ENCODE measurements at regions of chr22 and their contacts with region 1.

Region 1: GRCh38 chr22:37538590-37539357 is 19.6 kb upstream of the CARD10 start:
- DNase-seq: peak; percentile 92 to 95
- H3K4me3 ChIP-seq: no peak overlapping the region
- H3K27ac ChIP-seq: peak overlapping the region; percentile 46
- H3K4me1 ChIP-seq: peaks cover 60% of the 10 kb centered on the region
- H3K27me3 ChIP-seq: no peaks in the 10 kb centered on the region
- CTCF ChIP-seq: peak; percentile 99

Region 2: GRCh38 chr22:37445501-37445900 is 93.3 kb before region 1 on chr22:
- CTCF ChIA-PET with region 1: no interaction called
- POLR2A ChIA-PET with region 1: interaction called, 15 read pairs
- intact Hi-C with region 1: no loop called
- DNase-seq: no peak
- H3K4me3 ChIP-seq: no peak overlapping the region
- H3K27ac ChIP-seq: no peak overlapping the region
- H3K4me1 ChIP-seq: peaks cover 24% of the 10 kb centered on the region
- H3K27me3 ChIP-seq: no peaks in the 10 kb centered on the region
- CTCF ChIP-seq: no peak

Region 3: DNA sequence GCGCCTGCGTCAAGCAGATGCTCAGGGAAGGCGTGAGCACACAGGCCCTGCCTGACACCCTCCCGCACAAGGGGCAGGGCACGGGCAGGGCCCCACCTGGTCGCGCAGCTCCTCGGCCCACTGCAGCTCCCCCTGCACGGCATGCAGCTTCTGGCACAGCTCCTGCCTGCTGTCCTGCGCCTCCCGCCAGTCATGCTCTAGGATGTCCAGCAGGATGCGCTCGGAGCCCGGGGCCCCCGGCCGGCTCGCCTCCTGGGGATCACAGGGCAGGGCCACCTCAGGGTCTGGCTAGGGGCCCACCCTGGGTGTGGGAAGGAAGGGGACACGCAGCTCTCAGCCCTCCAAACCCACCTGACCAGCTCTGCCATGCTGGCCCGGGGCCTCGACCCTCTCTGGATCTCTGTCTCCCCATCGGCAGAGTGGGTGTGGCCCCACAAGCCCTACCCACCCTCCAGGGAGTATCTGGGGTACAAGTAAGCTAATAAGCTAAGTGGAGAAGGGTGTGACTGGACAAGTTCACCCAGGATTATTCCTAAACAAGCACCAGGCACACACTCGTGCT is 30.3 kb before region 1 on chr22:
- CTCF ChIA-PET with region 1: interaction called, 18 read pairs
- POLR2A ChIA-PET with region 1: interaction called, 5 read pairs
- intact Hi-C with region 1: loop called (anchors 1 kb)
- DNase-seq: peak; percentile 59 to 90
- H3K4me3 ChIP-seq: peak overlapping the region; percentile 3; the same call in 1 of the 2 replicates
- H3K27ac ChIP-seq: peak overlapping the region; percentile 74
- H3K4me1 ChIP-seq: peaks cover 61% of the 10 kb centered on the region
- H3K27me3 ChIP-seq: no peaks in the 10 kb centered on the region
- CTCF ChIP-seq: peak; percentile 37; the same call in 1 of the 2 replicates

Region 4: GRCh38 chr22:37581504-37581903 is 42.7 kb after region 1 on chr22:
- CTCF ChIA-PET with region 1: no interaction called
- POLR2A ChIA-PET with region 1: interaction called, 16 read pairs
- intact Hi-C with region 1: no loop called
- DNase-seq: peak; percentile 69 to 70
- H3K4me3 ChIP-seq: no peak overlapping the region; the same call in 1 of the 2 replicates
- H3K27ac ChIP-seq: peak overlapping the region; percentile 52
- H3K4me1 ChIP-seq: peaks cover 15% of the 10 kb centered on the region
- H3K27me3 ChIP-seq: no peaks in the 10 kb centered on the region
- CTCF ChIP-seq: no peak

Region 5: DNA sequence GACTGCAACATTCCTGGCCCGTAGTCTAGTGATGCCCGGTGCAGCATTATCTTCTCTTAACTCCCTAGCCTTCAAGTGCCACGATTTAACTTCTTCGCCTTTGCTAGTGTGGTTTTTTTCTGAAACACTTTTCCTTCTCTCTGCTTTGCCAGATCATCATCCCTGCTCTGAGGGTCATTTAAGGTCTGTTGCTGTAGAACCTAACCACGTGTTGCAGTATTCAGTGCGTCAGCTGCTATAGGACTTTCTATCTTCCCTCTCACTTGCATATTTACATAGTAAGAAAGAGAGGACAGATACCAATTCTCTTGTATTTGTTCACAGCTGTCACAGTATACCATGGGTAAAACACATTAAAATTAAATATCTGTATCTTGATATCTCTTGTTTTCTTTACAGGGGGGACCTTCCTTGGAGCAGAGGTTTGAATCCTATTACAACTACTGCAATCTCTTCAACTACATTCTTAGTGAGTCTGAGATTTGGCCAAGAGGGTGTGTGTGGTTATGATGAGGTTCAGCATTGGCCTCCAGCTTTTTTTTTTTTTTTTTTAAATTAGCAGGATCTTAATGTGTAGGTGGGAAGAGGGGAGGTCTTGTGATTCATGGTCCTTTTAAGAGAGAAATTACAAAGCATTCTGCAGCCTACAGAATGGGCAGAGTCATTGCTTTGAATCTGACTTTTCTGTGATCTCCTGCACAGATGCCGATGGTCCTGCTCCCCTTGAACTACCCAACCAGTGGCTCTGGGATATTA is 324.0 kb after region 1 on chr22:
- CTCF ChIA-PET with region 1: interaction called, 3 read pairs
- POLR2A ChIA-PET with region 1: no interaction called
- intact Hi-C with region 1: loop called (anchors 2 kb)
- DNase-seq: no peak
- H3K4me3 ChIP-seq: no peak overlapping the region
- H3K27ac ChIP-seq: no peak overlapping the region
- H3K4me1 ChIP-seq: no peaks in the 10 kb centered on the region
- H3K27me3 ChIP-seq: no peaks in the 10 kb centered on the region
- CTCF ChIP-seq: no peak